ENCODE measurements at regions of chr10 and their contacts with region 1.

Region 1: GRCh38 chr10:74330646-74331045 is 179.6 kb downstream of the ADK start:
- DNase-seq: no peak
- ATAC-seq: no peak
- H3K4me3 ChIP-seq: no peak overlapping the region
- H3K27ac ChIP-seq: no peak overlapping the region
- H3K4me1 ChIP-seq: no peaks in the 10 kb centered on the region
- H3K27me3 ChIP-seq: no peaks in the 10 kb centered on the region
- CTCF ChIP-seq: no peak

Region 2: DNA sequence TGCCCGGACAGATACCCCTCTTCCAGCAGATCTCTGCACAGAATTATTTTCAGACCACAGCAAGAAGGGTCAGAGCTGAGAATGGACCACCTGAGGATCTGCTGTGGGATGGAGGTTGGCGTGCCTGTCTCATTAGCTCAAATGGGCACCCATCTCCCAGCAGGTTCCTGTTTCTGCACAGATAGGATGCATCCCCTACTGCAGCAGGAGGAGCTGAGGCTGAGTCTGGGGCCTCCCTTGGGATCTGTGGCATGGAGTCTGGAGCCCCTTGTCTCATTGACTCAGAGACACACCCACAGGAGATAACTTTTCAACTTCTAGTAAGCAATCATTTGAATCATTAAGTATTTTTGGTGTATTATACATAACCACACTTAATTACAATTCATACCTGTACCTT is 33.1 kb after region 1 on chr10:
- CTCF ChIA-PET with region 1: no interaction called
- POLR2A ChIA-PET with region 1: interaction called, 10 read pairs
- intact Hi-C with region 1: no loop called
- DNase-seq: no peak
- ATAC-seq: peak; percentile 10; the same call in 1 of the 2 replicates
- H3K4me3 ChIP-seq: no peak overlapping the region
- H3K27ac ChIP-seq: no peak overlapping the region
- H3K4me1 ChIP-seq: peaks cover 19% of the 10 kb centered on the region
- H3K27me3 ChIP-seq: no peaks in the 10 kb centered on the region
- CTCF ChIP-seq: no peak